PC-3 (cell line): ENCODE measurements at regions of chr9 and their contacts with region 1.

Region 1: GRCh38 chr9:17744786-17745185 is 165.9 kb downstream of the SH3GL2 start:
- DNase-seq: peak; percentile 53
- ATAC-seq: no peak
- H3K4me3 ChIP-seq: no peak overlapping the region
- H3K27ac ChIP-seq: no peak overlapping the region
- H3K4me1 ChIP-seq: peaks cover 8% of the 10 kb centered on the region
- H3K27me3 ChIP-seq: no peaks in the 10 kb centered on the region
- CTCF ChIP-seq: no peak

Region 2: DNA sequence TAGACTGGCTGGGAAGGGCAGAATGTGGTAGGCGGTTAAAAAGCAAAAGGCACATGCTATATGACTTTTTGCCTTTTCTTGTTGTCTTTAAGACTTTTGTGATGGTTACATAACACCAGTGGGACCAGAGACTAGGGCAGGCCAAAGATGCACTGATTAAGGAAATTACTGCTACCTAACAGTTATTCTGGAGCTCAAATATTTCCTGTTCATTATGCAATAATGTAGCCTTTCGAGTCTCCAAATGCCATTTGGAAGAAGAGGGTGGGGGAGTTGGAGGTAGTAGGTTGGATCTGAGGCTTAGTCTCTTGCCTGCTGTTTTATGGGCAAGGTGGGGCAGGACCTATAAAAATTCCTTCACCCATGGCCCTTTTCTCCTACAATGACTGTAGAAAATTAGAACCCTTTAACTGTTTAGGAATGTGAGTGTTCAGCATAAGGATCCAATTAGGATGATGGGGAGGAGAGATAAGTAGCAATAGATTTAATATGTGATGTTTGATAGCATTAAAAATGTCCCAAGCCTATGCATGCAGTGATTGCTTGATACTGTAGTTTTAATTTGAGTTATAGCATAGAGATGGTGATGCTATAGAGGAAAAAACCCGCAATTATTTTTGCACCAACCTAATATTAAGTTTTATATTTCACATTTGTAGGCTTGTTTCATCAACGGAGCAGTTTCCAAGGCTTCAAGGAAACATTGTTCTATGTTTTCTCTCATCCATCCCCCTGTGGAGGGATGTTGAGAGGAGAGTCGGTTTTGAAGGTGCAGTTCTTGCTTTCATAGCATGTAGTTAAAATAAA is 114.1 kb before region 1 on chr9:
- CTCF ChIA-PET with region 1: no interaction called
- POLR2A ChIA-PET with region 1: no interaction called
- intact Hi-C with region 1: loop called (anchors 10 kb)
- DNase-seq: peak; percentile 83
- ATAC-seq: peak; percentile 81
- H3K4me3 ChIP-seq: peak overlapping the region; percentile 23; the same call in 1 of the 2 replicates
- H3K27ac ChIP-seq: peak overlapping the region; percentile 57
- H3K4me1 ChIP-seq: peaks cover 41% of the 10 kb centered on the region
- H3K27me3 ChIP-seq: no peaks in the 10 kb centered on the region
- CTCF ChIP-seq: no peak

Region 3: GRCh38 chr9:17865881-17866280 is 121.1 kb after region 1 on chr9:
- CTCF ChIA-PET with region 1: no interaction called
- POLR2A ChIA-PET with region 1: no interaction called
- intact Hi-C with region 1: no loop called
- DNase-seq: no peak
- ATAC-seq: no peak
- H3K4me3 ChIP-seq: no peak overlapping the region
- H3K27ac ChIP-seq: no peak overlapping the region
- H3K4me1 ChIP-seq: no peaks in the 10 kb centered on the region
- H3K27me3 ChIP-seq: peaks cover 25% of the 10 kb centered on the region
- CTCF ChIP-seq: no peak